ENCODE measurements at regions of chr19 and their contacts with region 1.

Region 1: GRCh38 chr19:56333505-56333904 is 18.9 kb upstream of the ZSCAN5A start:
- DNase-seq: peak; percentile 40
- H3K4me3 ChIP-seq: no peak overlapping the region
- H3K27ac ChIP-seq: no peak overlapping the region
- H3K4me1 ChIP-seq: no peaks in the 10 kb centered on the region
- H3K27me3 ChIP-seq: no peaks in the 10 kb centered on the region
- CTCF ChIP-seq: peak; percentile 83 to 88

Region 2: GRCh38 chr19:56155124-56155687 is 178.3 kb before region 1 on chr19:
- CTCF ChIA-PET with region 1: no interaction called
- dilution Hi-C with region 1: no loop called
- in situ Hi-C with region 1: no loop called
- intact Hi-C with region 1: no loop called
- DNase-seq: no peak
- H3K4me3 ChIP-seq: no peak overlapping the region
- H3K27ac ChIP-seq: no peak overlapping the region
- H3K4me1 ChIP-seq: no peaks in the 10 kb centered on the region
- H3K27me3 ChIP-seq: no peaks in the 10 kb centered on the region
- CTCF ChIP-seq: peak; percentile 18 to 37

Region 3: GRCh38 chr19:56170261-56170660 is 163.2 kb before region 1 on chr19:
- CTCF ChIA-PET with region 1: no interaction called
- dilution Hi-C with region 1: no loop called
- in situ Hi-C with region 1: no loop called
- intact Hi-C with region 1: loop called (anchors 5 kb)
- DNase-seq: peak; percentile 75
- H3K4me3 ChIP-seq: no peak overlapping the region
- H3K27ac ChIP-seq: no peak overlapping the region
- H3K4me1 ChIP-seq: no peaks in the 10 kb centered on the region
- H3K27me3 ChIP-seq: no peaks in the 10 kb centered on the region
- CTCF ChIP-seq: no peak

Region 4: DNA sequence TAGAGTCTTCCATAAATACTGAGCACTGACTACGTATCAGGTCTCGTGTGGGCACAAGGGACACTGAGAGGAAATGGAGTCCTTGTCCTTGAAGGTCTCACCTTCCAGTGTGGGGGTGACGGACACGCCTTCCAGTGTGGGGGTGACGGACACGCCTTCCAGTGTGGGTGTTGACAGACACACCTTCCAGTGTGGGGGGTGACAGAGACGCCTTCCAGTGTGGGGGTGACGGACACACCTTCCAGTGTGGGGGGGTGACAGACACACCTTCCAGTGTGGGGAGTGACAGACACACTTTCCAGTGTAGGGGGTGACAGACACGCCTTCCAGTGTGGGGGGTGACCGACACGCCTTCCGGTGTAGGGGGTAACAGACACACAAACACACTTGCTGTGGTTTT is 75.2 kb before region 1 on chr19:
- CTCF ChIA-PET with region 1: interaction called, 141 read pairs
- dilution Hi-C with region 1: no loop called
- in situ Hi-C with region 1: loop called in 1 of 2 experiments (anchors 5 kb)
- intact Hi-C with region 1: loop called (anchors 1 kb)
- DNase-seq: no peak
- H3K4me3 ChIP-seq: no peak overlapping the region
- H3K27ac ChIP-seq: no peak overlapping the region
- H3K4me1 ChIP-seq: no peaks in the 10 kb centered on the region
- H3K27me3 ChIP-seq: no peaks in the 10 kb centered on the region
- CTCF ChIP-seq: no peak

Region 5: GRCh38 chr19:56314562-56315077 is 18.9 kb before region 1 on chr19 and contains the start of gene ZSCAN5A:
- CTCF ChIA-PET with region 1: interaction called, 15 read pairs
- dilution Hi-C with region 1: no loop called
- in situ Hi-C with region 1: no loop called
- intact Hi-C with region 1: no loop called
- DNase-seq: peak; percentile 95
- H3K4me3 ChIP-seq: peak within 1 kb of the TSS; percentile 66 to 91 (median 80)
- H3K27ac ChIP-seq: peak within 1 kb of the TSS; percentile 95
- H3K4me1 ChIP-seq: peaks cover 6% of the 10 kb centered on the region
- H3K27me3 ChIP-seq: no peaks in the 10 kb centered on the region
- CTCF ChIP-seq: no peak
- total RNA-seq, gene ZSCAN5A: 5.5 to 7.4 TPM

Measured in mammary epithelial cell (primary cell).